ENCODE measurements at regions of chr17 and their contacts with region 1.

Region 1: DNA sequence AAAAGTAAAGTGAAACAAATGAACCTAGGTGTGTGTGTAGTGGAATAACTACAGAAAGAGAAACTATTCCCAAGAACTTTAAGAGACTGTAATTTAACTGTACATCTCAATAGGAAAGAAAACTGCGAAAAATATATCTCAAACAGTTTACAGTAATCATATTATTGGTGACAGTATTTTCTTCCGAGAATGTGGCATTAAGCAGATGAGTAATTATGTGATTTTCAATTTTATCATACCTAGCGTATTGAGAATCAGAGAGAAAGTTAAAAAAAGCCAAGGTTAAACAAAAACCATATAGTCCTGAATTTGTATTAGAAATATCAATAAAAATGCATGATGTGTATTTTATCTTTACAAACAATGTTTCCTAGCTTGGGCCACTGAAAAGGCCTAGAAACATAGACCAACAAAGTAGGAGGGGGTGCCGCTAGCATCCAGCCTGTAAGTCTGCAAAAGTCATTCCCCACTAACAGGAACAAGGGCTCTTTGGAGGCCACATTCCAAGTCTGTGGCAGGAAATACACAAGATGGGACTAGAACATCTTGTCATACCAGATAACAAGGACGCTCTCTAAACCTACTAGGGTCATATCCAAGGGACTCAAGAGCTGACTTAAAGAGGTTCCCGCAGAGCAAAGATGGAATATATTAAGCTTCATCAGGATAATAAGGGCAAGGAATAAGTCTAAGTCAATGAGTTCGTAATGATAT is 20.5 kb downstream of the RNF157 start:
- DNase-seq: no peak
- ATAC-seq: no peak
- H3K4me3 Mint-ChIP-seq: no peak overlapping the region
- H3K27ac Mint-ChIP-seq: peak overlapping the region; percentile 49
- H3K4me1 Mint-ChIP-seq: peaks cover 42% of the 10 kb centered on the region
- H3K27me3 Mint-ChIP-seq: no peaks in the 10 kb centered on the region
- CTCF ChIP-seq: no peak

Region 2: DNA sequence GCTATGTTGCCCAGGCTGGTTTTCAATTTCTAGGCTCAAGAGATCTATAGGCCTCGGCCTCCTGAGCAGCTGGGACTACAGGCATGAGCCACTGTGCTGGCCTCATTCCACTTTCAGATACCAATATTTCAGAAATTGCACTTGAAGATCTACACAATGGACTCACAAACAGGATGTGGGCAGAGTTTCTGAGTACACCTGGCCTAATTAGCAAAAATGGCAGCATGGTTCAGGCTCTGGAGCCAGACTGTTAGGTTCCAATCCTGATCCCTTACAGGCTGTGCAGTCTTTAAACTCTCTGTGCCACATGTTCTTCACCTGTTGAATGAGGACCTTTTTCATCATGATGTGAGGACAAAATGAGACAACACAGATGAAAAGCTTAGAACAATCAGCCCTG is 11.7 kb before region 1 on chr17:
- CTCF ChIA-PET with region 1: interaction called, 11 read pairs
- POLR2A ChIA-PET with region 1: interaction called, 3 read pairs
- intact Hi-C with region 1: no loop called
- DNase-seq: no peak
- ATAC-seq: peak; percentile 62
- H3K4me3 Mint-ChIP-seq: no peak overlapping the region
- H3K27ac Mint-ChIP-seq: peak overlapping the region; percentile 61
- H3K4me1 Mint-ChIP-seq: peaks cover 36% of the 10 kb centered on the region
- H3K27me3 Mint-ChIP-seq: no peaks in the 10 kb centered on the region
- CTCF ChIP-seq: no peak